Left ventricle myocardium superior (tissue), 1 donor: ENCODE measurements at regions of chr11 and their contacts with region 1.

Region 1: GRCh38 chr11:74449369-74449931 is 17.9 kb downstream of the KCNE3 start:
- DNase-seq: no peak
- ATAC-seq: peak; percentile 87

Region 2: DNA sequence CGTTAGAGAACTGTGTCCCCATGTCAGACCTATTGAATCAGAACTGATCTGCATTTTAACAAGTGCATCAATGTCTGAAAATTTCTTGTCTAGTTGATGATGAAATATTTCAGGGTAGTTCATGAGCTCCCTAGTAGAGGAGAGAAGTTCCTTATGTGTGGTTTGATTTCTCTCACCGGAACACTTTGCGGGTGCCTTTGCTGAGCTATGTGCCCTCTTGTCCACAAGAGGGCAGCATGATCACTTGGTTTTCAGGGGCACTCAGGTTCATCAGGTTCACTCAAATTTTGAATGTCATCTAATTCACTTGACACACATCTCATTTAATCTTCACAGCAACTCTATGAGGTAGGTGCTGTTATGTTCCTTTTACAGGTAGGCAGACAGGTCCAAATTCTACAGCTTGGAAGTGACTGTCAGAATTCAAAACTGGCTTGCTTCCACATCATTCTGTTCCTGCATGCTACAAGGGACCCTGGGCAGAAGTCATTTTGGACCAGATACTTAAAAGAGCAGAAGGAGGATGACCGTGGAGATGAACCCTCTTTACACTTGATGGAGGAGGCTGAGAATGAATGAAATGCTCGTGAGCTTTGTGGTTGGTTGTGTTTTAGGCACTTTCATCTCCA is 193.6 kb before region 1 on chr11:
- intact Hi-C with region 1: loop called (anchors 5 kb)
- DNase-seq: peak; percentile 32
- ATAC-seq: peak; percentile 68

Region 3: GRCh38 chr11:74388678-74389327 is 60.6 kb before region 1 on chr11:
- intact Hi-C with region 1: loop called (anchors 5 kb)
- DNase-seq: no peak
- ATAC-seq: peak; percentile 75

Region 4: DNA sequence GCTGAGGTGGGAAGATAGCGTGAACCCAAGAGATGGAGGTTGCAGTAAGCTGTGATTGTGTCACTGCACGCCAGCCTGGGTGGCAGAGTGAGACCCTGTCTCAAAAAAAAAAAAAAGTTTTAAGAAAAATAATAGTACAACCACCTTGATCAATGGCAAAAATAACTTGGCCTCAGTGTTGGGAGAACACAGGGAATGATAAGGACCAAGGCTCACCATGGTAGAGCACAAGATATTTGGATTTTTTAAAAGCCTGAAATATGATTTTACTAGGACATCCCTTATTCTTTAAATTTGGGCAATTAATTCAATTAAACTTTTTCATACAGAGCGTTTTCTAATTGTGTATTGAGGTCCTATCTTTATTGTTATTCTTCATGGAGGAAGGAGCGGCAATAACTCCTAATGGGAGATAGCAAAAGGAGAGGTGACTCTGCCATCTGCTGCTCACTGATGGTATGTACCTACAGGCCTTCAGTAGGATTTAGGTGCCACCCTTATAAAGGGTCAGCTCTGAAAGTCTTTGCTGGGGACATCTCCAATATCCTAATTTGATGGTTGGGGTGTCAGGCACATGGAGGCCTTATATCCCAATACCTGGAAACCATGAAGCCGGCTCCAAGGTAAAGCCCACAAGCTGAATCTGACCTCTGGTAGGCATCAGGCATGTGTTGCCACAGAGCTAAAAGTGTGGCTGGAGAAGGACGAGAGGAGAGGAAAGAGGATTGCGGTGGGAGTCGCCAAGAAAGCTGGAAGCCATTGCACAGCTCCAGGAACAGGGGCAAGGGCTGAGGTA is 121.0 kb after region 1 on chr11:
- intact Hi-C with region 1: loop called (anchors 2 kb)
- DNase-seq: no peak
- ATAC-seq: peak; percentile 73

Region 5: DNA sequence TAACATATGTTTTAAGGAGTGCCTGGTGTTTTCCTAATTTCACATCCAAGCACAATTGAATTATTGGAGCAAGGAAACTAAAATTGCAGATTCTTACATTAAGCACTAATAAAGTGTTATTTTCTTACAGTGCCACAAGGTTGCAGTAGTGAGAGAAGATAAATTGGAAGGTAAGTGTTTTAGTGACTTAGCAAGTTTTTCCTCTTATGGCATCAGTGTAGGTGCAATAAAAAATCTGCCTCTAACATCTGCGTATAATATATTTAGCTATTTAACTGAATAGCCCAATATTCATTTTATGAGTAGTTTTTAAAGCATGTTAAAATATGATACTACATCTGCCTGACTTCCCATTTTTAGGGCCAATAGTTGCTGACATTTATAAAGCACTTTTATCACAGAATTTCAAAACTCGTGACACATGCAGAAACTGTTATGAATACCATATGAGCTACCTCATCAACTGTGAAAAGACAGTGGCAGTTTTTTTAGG is 162.0 kb after region 1 on chr11:
- intact Hi-C with region 1: no loop called
- DNase-seq: no peak
- ATAC-seq: peak; percentile 53